Astrocyte of the cerebellum (primary cell): ENCODE measurements at regions of chr5 and their contacts with region 1.

Region 1: GRCh38 chr5:142922223-142922952 is 152.2 kb downstream of the ARHGAP26 start:
- DNase-seq: no peak
- H3K4me3 ChIP-seq: no peak overlapping the region
- CTCF ChIP-seq: peak; percentile 11

Region 2: DNA sequence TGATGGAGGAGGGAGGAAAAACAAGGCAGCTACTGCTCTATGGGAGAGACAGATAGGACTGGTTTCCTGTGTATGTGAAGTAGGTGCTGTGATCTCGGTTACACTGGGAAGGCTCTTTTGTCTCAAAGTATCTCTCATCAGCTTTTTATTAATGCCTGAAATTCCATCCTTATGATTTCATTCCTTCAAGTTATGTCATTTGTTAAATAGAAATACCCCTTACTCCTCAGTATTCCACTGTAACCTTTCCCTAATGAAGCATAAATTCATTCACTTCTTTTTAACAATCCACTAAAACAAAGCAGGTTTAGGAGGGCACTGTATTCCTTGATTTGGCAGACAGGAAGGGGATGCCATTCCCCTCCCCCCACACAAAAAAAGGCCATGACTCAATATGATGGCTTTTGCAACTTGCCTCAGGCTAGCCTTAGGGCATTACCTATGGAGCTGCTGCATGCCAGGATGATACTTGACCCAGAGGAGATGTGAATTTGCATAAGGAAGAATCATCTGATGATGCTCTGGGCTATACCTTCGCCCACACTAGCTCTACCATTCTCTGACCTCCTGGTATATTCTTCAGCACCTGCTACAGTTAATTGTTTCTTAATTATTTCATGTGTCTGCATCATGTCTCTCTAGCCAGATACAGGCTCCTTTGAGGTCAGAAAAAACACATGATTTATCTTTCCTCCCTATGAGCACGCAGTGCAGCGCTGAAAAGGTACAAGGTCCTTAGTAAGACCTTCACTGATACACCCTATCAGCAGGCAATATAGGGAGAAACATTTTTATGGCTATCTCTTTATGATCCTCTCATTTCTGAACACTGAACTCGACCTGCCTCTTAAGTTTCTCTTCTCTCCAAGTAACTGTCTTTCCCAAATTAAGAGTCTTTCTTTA is 454.8 kb after region 1 on chr5:
- in situ Hi-C with region 1: loop called (anchors 25 kb)
- DNase-seq: peak; percentile 35
- H3K4me3 ChIP-seq: no peak overlapping the region
- CTCF ChIP-seq: no peak